A549 (cell line): ENCODE measurements at regions of chr2 and their contacts with region 1.

Region 1: GRCh38 chr2:85230679-85231467 is 96.9 kb downstream of the TGOLN2 start:
- DNase-seq: no peak
- ATAC-seq: peak; percentile 27 to 66; a peak in 4 of 6 replicates
- H3K4me3 ChIP-seq: no peak overlapping the region
- H3K27ac ChIP-seq: no peak overlapping the region
- H3K4me1 ChIP-seq: no peaks in the 10 kb centered on the region
- CTCF ChIP-seq: no peak
- EP300 ChIP-seq: no peak
- POLR2A ChIP-seq: no peak
- RAD21 ChIP-seq: no peak

Region 2: DNA sequence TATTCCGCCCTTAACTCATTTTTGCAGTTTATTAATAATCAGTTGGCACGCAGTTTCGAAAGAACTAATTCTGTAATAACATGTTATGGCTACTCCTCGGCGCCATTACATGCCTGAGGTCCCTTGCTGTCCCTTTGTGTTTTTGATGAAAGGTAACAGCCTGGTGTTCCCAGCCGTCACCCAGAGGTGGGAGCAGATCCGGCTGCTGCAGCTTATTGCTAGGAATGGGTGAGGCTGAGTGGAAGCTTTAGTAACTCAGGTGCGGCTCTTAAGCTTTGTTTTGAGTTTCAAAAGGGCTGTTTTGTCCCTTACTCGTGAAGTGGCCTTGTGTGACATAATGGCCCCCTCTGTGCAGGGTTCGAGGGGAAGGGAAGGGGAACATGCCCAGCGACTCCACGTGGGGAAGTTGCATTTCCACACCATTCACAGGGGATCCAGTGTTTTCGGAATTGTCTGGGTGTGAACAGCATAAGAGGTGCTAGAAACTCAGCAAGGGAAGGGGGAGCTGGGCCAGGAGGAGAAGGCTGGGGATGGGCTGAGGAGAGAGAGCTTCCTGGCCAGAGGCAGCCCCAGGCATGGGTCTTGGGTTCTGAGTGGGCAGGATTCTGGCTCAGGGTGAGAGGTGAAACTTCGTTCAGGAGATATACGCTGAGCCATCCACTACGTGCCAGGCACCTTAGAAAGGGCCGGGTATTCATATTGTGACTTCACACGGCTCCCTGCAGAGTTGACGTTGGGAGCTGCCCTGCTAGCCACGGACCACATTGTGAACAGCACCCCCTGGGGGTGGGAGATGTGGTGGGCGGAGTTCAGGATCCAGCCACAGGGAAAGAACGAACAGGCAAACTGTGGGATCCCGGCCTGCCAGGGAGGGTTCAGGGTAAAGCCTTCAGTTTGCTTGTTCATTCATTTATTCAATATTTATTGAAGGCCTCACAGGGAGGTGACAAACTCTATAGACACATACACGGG is 12.5 kb after region 1 on chr2:
- CTCF ChIA-PET with region 1: interaction called, 13 read pairs
- POLR2A ChIA-PET with region 1: no interaction called
- DNase-seq: peak; percentile 51 to 73
- ATAC-seq: peak; percentile 54 to 87; a peak in 4 of 6 replicates
- H3K4me3 ChIP-seq: no peak overlapping the region
- H3K27ac ChIP-seq: no peak overlapping the region
- H3K4me1 ChIP-seq: peaks cover 4% of the 10 kb centered on the region
- CTCF ChIP-seq: peak; percentile 34
- EP300 ChIP-seq: no peak
- POLR2A ChIP-seq: no peak
- RAD21 ChIP-seq: peak in 1 of 2 experiments; percentile 34; a peak in 2 of 5 replicates